ENCODE measurements at regions of chr4 and their contacts with region 1.

Region 1: DNA sequence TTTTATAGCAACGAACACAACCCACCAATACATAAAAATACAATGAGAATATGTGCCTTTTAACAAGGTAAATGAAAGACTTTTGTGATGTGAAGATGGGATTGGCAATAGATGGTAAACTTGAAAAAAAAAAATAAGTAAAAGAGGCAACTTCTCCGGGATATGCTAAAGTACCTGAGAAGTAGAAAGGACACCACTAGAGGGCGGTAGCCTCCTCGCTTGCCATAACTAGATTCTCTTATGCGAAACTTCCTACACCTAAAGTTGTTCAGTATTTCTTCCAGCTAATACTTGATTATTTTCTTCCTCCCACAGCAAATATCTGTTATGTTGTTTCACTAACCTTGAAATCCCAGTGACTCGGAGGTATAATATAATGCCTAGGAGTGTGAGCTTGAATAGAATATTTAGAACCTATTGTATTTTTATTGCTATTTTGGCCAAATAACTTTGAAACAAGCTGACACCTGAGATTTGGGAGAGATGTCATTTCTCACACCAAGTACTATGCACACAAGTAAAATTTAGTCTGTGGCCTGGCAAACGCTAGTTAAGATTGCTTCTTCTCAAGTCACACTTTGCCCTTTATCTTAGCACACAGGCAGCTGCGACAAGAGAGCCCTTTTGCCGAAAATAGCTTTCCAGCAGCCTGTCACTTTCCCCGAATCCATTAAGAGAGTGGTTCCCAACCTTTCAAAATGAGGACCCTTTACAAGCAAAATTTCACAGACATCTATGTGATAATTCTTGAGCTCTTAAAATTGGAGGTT is 44.9 kb upstream of the PDLIM5 start:
- DNase-seq: peak; percentile 40 to 77 (median 64)
- ATAC-seq: peak; percentile 80 to 90 (median 88)
- H3K4me3 ChIP-seq: peak overlapping the region in 1 of 3 donors; percentile 6
- H3K27ac ChIP-seq: peak overlapping the region in 1 of 3 donors; percentile 33
- H3K4me1 ChIP-seq: peaks cover 0 to 25% (median 6%) of the 10 kb centered on the region in 4 donors
- H3K27me3 ChIP-seq: no peaks in the 10 kb centered on the region
- CTCF ChIP-seq: peak; percentile 80 to 97 (median 91)
- POLR2A ChIP-seq: no peak

Region 2: DNA sequence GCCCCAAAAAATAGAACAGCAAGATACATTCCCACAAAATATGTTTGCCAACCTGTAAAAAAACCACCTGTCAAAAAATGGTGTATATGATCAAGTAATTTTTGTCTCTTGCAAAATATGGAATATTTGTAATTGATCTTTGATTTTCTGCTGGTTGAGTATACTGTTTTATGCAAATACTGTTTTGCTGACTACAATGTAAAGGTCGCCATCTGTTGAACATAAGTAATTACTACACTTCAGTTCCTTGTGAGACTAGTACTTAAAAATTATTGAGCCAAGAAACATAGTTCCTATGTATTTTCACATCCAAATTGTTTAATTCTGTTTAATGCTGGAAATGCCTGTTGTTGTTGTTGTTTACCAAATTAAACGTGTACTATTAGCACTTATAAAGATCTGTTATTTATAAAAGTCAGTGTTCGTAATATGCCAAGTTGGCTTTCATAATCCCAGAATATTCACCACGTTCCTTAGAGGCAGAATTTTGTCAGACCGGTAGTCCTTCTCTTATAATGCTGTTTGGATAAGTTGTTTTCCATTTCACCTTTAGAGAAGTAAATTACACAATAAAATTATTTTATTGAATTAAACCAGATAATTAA is 189.1 kb after region 1 on chr4:
- intact Hi-C with region 1: loop called (anchors 10 kb)
- DNase-seq: no peak
- ATAC-seq: peak; percentile 76 to 87 (median 84)
- H3K4me3 ChIP-seq: no peak overlapping the region
- H3K27ac ChIP-seq: no peak overlapping the region
- H3K4me1 ChIP-seq: peaks cover 0 to 3% (median 0%) of the 10 kb centered on the region in 4 donors
- H3K27me3 ChIP-seq: no peaks in the 10 kb centered on the region
- CTCF ChIP-seq: peak; percentile 54 to 78 (median 58)
- POLR2A ChIP-seq: no peak